PC-9 (cell line): ENCODE measurements at regions of chr3 and their contacts with region 1.

Region 1: GRCh38 chr3:72482589-72483321 is 365.5 kb downstream of the SHQ1 start:
- DNase-seq: peak; percentile 51 to 76
- H3K4me3 ChIP-seq: peak overlapping the region; percentile 46; the same call in 1 of the 2 replicates
- H3K27ac ChIP-seq: peak overlapping the region; percentile 49
- H3K4me1 ChIP-seq: peaks cover 32% of the 10 kb centered on the region
- H3K27me3 ChIP-seq: no peaks in the 10 kb centered on the region
- CTCF ChIP-seq: no peak

Region 2: GRCh38 chr3:72310419-72311380 is 172.1 kb before region 1 on chr3:
- CTCF ChIA-PET with region 1: no interaction called
- POLR2A ChIA-PET with region 1: no interaction called
- intact Hi-C with region 1: no loop called
- DNase-seq: peak in 1 of 2 experiments; percentile 7
- H3K4me3 ChIP-seq: no peak overlapping the region
- H3K27ac ChIP-seq: no peak overlapping the region
- H3K4me1 ChIP-seq: no peaks in the 10 kb centered on the region
- H3K27me3 ChIP-seq: no peaks in the 10 kb centered on the region
- CTCF ChIP-seq: no peak

Region 3: DNA sequence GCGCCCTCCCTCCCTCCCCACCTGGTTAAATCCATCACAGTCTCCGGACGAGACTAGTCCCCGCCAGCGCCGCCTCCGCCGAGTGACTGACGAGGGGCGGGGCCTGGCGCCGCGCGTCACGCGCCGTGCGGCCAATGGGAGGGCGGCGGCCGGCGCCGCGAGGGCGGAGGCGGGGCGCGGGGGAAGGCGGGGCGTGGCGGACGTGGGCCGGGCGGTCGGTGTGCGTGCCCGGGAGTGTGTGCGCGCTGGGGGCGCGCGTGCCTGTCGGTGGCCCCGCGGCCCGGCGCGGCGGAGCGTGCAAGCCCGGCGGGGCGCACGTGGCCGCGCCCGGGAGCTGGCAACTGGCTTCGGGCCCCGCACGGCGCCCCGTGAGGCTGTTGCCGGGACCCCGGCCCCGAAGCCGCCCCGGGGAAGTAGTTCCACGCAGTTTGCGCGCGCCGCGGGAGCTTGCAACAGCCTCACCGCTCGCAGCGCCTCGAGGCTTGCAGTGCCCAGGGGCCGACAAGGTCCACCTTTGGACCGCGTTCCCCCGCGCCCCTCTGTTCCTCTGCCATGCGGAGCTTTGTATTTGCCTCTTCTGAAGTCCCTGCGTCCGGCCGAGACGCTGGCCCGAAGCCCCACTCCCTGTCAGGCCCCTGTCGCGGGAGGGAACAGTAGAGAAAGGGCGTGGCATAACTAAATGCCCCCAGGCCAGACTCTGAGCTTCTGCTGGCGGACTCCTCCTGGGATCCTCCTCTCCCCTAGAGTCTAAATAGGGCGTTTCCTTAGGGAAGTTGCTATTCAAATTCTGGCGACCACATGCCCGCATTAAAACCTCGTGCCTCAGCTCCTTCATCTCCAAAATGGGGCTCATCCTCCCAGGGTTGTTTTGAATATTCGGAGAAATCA is 35.5 kb before region 1 on chr3:
- CTCF ChIA-PET with region 1: no interaction called
- POLR2A ChIA-PET with region 1: interaction called, 9 read pairs
- intact Hi-C with region 1: loop called (anchors 2 kb)
- DNase-seq: peak; percentile 50 to 93
- H3K4me3 ChIP-seq: peak overlapping the region; percentile 66
- H3K27ac ChIP-seq: peak overlapping the region; percentile 61; the same call in 1 of the 2 replicates
- H3K4me1 ChIP-seq: peaks cover 23% of the 10 kb centered on the region
- H3K27me3 ChIP-seq: no peaks in the 10 kb centered on the region
- CTCF ChIP-seq: no peak

Region 4: GRCh38 chr3:72629191-72629631 is 146.5 kb after region 1 on chr3:
- CTCF ChIA-PET with region 1: no interaction called
- POLR2A ChIA-PET with region 1: no interaction called
- intact Hi-C with region 1: loop called (anchors 1 kb)
- DNase-seq: peak in 1 of 2 experiments; percentile 76
- H3K4me3 ChIP-seq: no peak overlapping the region
- H3K27ac ChIP-seq: peak overlapping the region; percentile 93
- H3K4me1 ChIP-seq: peaks cover 61% of the 10 kb centered on the region
- H3K27me3 ChIP-seq: no peaks in the 10 kb centered on the region
- CTCF ChIP-seq: no peak

Region 5: DNA sequence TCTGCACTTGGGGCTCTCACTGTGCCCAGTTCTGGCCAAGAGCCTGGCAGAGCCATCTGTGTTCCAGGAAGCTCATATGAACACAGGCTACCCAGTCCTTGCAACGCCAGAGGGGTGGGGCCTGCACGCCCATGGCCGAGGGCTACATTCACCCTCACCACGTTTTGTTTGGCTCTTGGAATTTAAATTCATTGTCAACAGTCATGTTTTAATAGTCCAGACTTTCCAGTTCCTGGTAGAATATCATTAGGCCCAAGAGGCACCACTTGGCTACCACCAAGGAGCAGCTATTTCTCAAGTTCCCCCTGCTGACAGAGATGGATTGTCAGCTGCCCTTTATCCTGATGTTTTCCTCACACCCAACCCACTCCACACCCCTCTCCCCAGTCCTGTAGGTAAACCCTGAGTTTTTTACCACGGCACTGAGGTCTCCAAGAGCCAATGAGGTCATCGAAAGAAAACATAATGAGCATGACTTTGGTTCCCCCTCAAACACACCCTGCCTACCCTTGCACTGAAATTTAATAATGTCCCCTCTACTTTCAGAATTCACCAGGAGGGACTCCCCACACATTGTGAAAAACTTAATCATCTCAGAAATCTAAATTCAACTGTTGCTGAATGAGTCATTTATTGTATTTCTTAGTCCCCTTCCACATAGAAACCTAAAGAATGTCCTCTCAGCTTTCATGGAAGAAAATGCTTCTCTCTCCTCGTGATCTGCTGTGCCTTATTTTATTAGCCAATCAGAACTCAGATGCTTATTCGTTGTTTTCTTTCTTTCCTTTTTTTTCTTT is 240.4 kb after region 1 on chr3:
- CTCF ChIA-PET with region 1: interaction called, 11 read pairs
- POLR2A ChIA-PET with region 1: interaction called, 3 read pairs
- intact Hi-C with region 1: loop called (anchors 1 kb)
- DNase-seq: peak; percentile 89 to 93
- H3K4me3 ChIP-seq: no peak overlapping the region; the same call in 1 of the 2 replicates
- H3K27ac ChIP-seq: peak overlapping the region; percentile 97
- H3K4me1 ChIP-seq: peaks cover 41% of the 10 kb centered on the region
- H3K27me3 ChIP-seq: no peaks in the 10 kb centered on the region
- CTCF ChIP-seq: no peak

Region 6: DNA sequence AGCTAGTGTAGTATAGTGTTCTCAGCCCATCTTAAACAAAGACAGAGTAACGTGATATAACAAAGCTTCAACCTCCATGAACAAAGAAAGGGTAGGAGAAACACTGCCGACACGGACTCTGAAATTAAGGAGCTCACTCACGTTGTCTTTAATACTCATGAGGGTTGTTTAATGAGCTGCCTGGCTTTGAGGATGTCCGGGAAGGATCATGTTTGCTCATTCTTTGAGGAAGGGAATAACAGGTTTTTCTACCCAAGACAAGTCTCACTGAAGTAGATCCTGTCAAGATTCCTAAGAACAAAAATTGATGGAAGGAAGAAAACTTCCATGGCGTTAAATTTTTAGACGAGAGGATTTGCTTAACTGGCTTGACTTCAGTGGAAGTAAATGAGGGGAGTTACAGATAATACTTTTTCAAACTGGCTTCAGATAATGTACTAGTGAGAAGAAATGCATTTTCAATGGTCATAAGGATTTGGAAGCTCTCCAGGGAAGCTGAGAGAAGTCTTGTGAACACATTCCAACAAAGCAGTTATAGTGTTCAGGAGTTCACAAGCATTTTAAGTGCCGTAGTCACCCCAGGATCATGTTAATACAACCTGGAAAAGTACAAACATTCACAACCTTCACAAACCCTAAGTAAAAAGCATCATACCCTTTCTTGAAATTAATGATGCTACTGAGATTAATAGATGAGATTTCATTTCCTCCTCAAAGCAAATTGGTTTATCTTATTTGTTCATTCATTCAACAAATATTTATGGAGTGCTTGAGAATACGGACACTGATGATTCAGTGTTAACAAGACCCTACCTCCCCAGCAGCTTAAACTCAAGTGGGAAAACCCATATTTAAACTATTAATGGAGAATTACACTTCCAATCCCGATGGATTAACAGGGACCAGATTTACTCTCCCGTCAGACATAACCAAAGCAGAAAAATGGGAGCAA is 264.0 kb after region 1 on chr3:
- CTCF ChIA-PET with region 1: no interaction called
- POLR2A ChIA-PET with region 1: interaction called, 36 read pairs
- intact Hi-C with region 1: no loop called
- DNase-seq: peak in 1 of 2 experiments; percentile 50
- H3K4me3 ChIP-seq: no peak overlapping the region
- H3K27ac ChIP-seq: no peak overlapping the region
- H3K4me1 ChIP-seq: peaks cover 8% of the 10 kb centered on the region; the same call in 1 of the 2 replicates
- H3K27me3 ChIP-seq: no peaks in the 10 kb centered on the region
- CTCF ChIP-seq: no peak